ENCODE measurements at regions of chr10 and their contacts with region 1.

Region 1: GRCh38 chr10:60646966-60647796 is 131.1 kb upstream of the CDK1 start:
- DNase-seq: peak; percentile 52 to 77
- H3K4me3 ChIP-seq: no peak overlapping the region
- H3K4me3 Mint-ChIP-seq: no peak overlapping the region
- H3K27ac Mint-ChIP-seq: no peak overlapping the region
- H3K4me1 ChIP-seq: peaks cover 39% of the 10 kb centered on the region
- H3K4me1 Mint-ChIP-seq: peaks cover 35% of the 10 kb centered on the region
- H3K27me3 ChIP-seq: no peaks in the 10 kb centered on the region
- H3K27me3 Mint-ChIP-seq: no peaks in the 10 kb centered on the region
- CTCF ChIP-seq: peak; percentile 82 to 97

Region 2: DNA sequence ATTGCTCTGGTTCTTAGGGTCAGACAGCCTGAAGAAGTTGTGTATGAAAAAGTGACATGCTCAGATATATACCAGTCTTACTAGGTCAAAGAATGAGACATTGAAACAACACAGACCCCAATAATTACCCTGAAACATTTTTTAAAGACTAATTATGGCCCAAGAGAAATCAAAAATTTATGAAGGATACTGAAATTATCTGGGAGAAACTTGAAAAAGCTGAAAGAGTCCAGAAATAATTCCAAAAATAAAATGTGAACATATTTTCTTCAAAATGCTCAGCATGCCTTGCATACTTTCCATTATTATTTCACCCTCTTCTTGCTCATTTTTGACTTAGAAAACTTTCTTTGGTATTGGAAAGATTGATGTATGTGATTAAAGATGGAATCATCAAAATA is 541.9 kb before region 1 on chr10:
- CTCF ChIA-PET with region 1: interaction called, 10 read pairs
- POLR2A ChIA-PET with region 1: no interaction called
- intact Hi-C with region 1: loop called (anchors 5 kb)
- DNase-seq: no peak
- H3K4me3 ChIP-seq: no peak overlapping the region
- H3K4me3 Mint-ChIP-seq: no peak overlapping the region
- H3K27ac Mint-ChIP-seq: no peak overlapping the region
- H3K4me1 ChIP-seq: no peaks in the 10 kb centered on the region
- H3K4me1 Mint-ChIP-seq: no peaks in the 10 kb centered on the region
- H3K27me3 ChIP-seq: no peaks in the 10 kb centered on the region
- H3K27me3 Mint-ChIP-seq: no peaks in the 10 kb centered on the region
- CTCF ChIP-seq: no peak

Region 3: GRCh38 chr10:60549686-60550085 is 97.5 kb before region 1 on chr10:
- CTCF ChIA-PET with region 1: no interaction called
- POLR2A ChIA-PET with region 1: no interaction called
- intact Hi-C with region 1: loop called (anchors 1 kb)
- DNase-seq: peak in 1 of 2 experiments; percentile 45
- H3K4me3 ChIP-seq: no peak overlapping the region
- H3K4me3 Mint-ChIP-seq: no peak overlapping the region
- H3K27ac Mint-ChIP-seq: no peak overlapping the region
- H3K4me1 ChIP-seq: no peaks in the 10 kb centered on the region
- H3K4me1 Mint-ChIP-seq: no peaks in the 10 kb centered on the region
- H3K27me3 ChIP-seq: no peaks in the 10 kb centered on the region
- H3K27me3 Mint-ChIP-seq: no peaks in the 10 kb centered on the region
- CTCF ChIP-seq: peak; percentile 66 to 76

Measured in Caco-2 (cell line).